ENCODE measurements at regions of chr12 and their contacts with region 1.

Region 1: GRCh38 chr12:7092229-7092985 is at the start of gene C1R:
- DNase-seq: peak; percentile 79
- H3K4me3 ChIP-seq: peak within 1 kb of the TSS; percentile 27 to 49 (median 34)
- H3K27ac ChIP-seq: peak within 1 kb of the TSS; percentile 69 to 84 (median 75)
- H3K4me1 ChIP-seq: peaks cover 4 to 38% (median 5%) of the 10 kb centered on the region in 4 donors
- H3K27me3 ChIP-seq: no peaks in the 10 kb centered on the region
- CTCF ChIP-seq: peak; percentile 88 to 94 (median 90)
- EP300 ChIP-seq: no peak
- POLR2A ChIP-seq: peak; percentile 58
- total RNA-seq, gene C1R: 68.5 to 154 (median 125) TPM

Region 2: GRCh38 chr12:6267139-6267721 is 825.2 kb before region 1 on chr12:
- in situ Hi-C with region 1: no loop called
- intact Hi-C with region 1: no loop called
- DNase-seq: no peak
- H3K4me3 ChIP-seq: no peak overlapping the region
- H3K27ac ChIP-seq: no peak overlapping the region
- H3K4me1 ChIP-seq: peaks cover 0 to 10% (median 4%) of the 10 kb centered on the region in 4 donors
- H3K27me3 ChIP-seq: no peaks in the 10 kb centered on the region
- CTCF ChIP-seq: no peak
- EP300 ChIP-seq: no peak
- POLR2A ChIP-seq: no peak

Region 3: DNA sequence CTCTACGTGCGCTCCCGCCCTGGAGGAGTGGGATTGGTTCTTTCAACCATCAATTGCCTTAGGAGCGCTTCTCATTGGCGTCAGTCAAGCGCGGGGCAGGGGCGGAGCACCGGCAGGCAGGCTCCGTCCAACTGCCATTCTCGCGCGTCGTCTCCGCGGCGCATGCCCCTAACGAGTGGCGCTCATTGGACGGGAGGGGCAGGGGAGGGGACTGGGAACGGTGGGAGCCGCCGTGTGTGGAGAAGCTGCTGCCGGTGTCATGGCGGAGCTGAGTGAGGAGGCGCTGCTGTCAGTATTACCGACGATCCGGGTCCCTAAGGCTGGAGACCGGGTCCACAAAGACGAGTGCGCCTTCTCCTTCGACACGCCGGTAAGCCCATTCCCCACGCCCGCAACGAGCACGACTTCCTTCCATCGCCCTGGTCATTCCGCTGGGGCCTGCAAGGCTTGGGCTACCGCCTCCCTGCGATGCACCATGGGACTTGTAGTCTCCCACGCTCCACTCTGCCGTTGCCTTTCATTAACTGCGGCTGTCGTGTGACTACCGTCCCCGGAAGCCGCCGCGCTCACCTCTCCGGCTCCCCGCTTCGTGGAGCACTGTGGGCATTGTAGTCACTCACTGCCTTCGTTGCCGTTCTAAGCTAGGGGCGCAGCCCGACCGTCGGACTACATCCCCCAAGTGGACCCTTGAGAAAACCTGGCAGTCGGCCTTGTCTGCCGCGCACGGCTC is 240.3 kb before region 1 on chr12 and contains the start of gene USP5:
- in situ Hi-C with region 1: no loop called
- intact Hi-C with region 1: no loop called
- DNase-seq: peak; percentile 99
- H3K4me3 ChIP-seq: peak within 1 kb of the TSS; percentile 38 to 82 (median 54)
- H3K27ac ChIP-seq: peak within 1 kb of the TSS; percentile 97 to 99 (median 98)
- H3K4me1 ChIP-seq: peaks cover 10 to 27% (median 17%) of the 10 kb centered on the region in 4 donors
- H3K27me3 ChIP-seq: no peaks in the 10 kb centered on the region
- CTCF ChIP-seq: no peak
- EP300 ChIP-seq: no peak
- POLR2A ChIP-seq: no peak
- total RNA-seq, gene USP5: 30.5 to 171 (median 35.4) TPM

Region 4: DNA sequence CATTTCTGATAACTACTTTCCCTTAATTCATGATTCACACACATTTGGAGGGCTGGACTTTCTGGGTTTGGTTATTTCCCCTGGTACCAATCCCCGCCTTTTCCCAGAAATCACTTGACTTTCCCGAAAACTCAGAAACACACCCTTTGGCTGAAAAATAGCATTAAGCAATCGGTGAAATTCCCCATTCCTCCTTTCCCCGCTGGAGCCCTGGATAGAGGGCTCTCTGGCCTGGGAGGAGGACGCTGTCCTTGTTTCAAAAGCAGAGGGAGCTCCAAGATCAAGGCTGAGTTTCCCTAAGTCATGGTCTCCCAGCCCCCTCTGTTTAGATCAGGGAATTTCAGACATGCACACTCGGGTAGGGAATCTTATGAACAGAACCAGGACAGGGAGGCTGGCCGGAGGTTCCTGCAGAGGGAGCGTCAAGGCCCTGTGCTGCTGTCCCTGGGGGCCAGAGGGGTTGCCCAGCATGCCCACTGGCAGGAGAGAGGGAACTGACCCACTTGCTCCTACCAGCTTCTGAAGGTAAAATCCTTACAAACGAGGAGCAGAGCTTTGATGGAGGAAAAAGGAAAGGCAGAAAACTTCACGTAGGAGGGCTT is 32.0 kb before region 1 on chr12 and contains the start of gene C1S:
- in situ Hi-C with region 1: no loop called
- intact Hi-C with region 1: loop called (anchors 2 kb)
- DNase-seq: peak; percentile 54
- H3K4me3 ChIP-seq: peak within 1 kb of the TSS; percentile 14 to 49 (median 24)
- H3K27ac ChIP-seq: peak within 1 kb of the TSS; percentile 72 to 85 (median 82)
- H3K4me1 ChIP-seq: peaks cover 0 to 20% (median 8%) of the 10 kb centered on the region in 4 donors
- H3K27me3 ChIP-seq: no peaks in the 10 kb centered on the region
- CTCF ChIP-seq: peak; percentile 48 to 73 (median 62)
- EP300 ChIP-seq: peak; percentile 65
- POLR2A ChIP-seq: peak; percentile 69
- total RNA-seq, gene C1S: 103 to 191 (median 117) TPM

Region 5: GRCh38 chr12:7877420-7877819 is 785.0 kb after region 1 on chr12:
- in situ Hi-C with region 1: no loop called
- intact Hi-C with region 1: no loop called
- DNase-seq: no peak
- H3K4me3 ChIP-seq: no peak overlapping the region
- H3K27ac ChIP-seq: no peak overlapping the region
- H3K4me1 ChIP-seq: no peaks in the 10 kb centered on the region
- H3K27me3 ChIP-seq: peaks cover 13% of the 10 kb centered on the region
- CTCF ChIP-seq: no peak
- EP300 ChIP-seq: no peak
- POLR2A ChIP-seq: no peak

Measured in transverse colon (tissue), 4 donors.